B cell (primary cell): ENCODE measurements at regions of chr2 and their contacts with region 1.

Region 1: DNA sequence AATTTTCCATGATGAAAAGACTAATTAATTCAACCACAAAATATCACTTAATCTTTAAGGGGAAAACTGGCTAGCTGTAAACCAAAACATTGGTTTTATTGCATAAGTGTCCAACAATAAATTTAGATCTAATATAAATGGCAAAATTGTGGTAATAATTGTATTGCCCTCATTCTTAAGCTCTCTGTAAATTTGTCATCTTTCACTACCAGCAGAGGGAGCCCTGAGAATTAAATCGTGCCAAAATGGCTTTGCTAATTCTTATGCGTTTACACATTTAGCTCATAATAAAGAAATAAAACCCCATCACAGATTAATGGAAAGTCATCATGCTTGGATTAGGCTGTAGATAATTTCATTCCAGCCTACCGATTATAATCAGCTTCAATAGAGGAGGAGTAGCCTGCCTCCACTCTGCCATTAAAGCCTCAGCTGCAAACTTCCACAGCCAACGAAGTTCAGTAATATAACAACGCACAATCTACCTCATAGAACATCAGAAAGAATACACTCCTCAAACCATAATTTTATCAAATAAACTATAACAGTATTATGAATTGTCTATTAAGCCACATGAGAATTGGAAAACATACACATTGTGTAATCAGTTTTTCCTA is 70.0 kb upstream of the ATP5MC3 start:
- DNase-seq: peak; percentile 30
- ATAC-seq: no peak
- H3K4me3 ChIP-seq: no peak overlapping the region
- H3K4me3 Mint-ChIP-seq: no peak overlapping the region
- H3K27ac ChIP-seq: no peak overlapping the region
- H3K27ac Mint-ChIP-seq: no peak overlapping the region
- H3K4me1 ChIP-seq: no peaks in the 10 kb centered on the region
- H3K4me1 Mint-ChIP-seq: no peaks in the 10 kb centered on the region
- H3K27me3 ChIP-seq: peaks cover 0 to 18% (median 0%) of the 10 kb centered on the region in 4 experiments
- H3K27me3 Mint-ChIP-seq: peaks cover 38% of the 10 kb centered on the region
- CTCF ChIP-seq: peak; percentile 75

Region 2: DNA sequence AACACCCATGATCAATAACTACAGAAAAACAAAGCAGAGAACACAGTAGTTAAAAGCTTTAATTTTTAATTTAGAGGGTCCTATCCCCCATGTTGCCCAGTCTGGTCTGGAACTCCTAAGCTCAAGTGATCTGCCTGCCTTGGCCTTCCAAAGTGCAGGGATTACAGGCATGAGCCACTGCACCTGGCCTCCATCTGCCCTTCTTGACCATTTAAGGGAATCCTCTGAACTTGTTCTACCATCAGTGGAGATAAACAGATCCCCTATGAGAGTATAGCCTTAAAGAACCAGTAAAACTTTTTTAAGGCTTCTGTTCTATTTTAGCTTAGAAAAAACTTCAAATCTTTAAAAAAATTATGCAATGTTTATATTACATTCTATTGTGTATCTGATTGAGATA is 56.5 kb before region 1 on chr2:
- CTCF ChIA-PET with region 1: no interaction called
- POLR2A ChIA-PET with region 1: no interaction called
- intact Hi-C with region 1: no loop called
- DNase-seq: no peak
- ATAC-seq: no peak
- H3K4me3 ChIP-seq: no peak overlapping the region
- H3K4me3 Mint-ChIP-seq: no peak overlapping the region
- H3K27ac ChIP-seq: no peak overlapping the region
- H3K27ac Mint-ChIP-seq: no peak overlapping the region
- H3K4me1 ChIP-seq: no peaks in the 10 kb centered on the region
- H3K4me1 Mint-ChIP-seq: no peaks in the 10 kb centered on the region
- H3K27me3 ChIP-seq: no peaks in the 10 kb centered on the region
- H3K27me3 Mint-ChIP-seq: peaks cover 51% of the 10 kb centered on the region
- CTCF ChIP-seq: no peak

Region 3: DNA sequence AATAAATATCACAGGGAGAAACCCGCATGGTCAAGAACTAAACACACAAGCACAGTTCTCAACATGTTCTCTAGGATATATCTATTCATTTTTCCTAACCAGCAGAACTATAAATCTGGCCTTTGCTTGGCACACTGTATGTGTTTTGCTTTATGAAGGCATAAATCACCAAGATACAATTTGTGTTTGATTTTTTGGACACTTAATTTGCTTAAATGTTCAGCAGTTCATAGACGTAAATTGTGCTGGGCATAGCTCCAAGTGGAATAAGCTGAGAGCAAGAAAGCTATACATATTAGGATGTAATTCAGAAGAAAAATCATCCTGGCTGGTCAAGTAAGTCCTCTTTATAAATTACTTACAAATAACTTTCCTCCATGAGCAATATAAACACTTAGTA is 271.5 kb after region 1 on chr2:
- CTCF ChIA-PET with region 1: no interaction called
- POLR2A ChIA-PET with region 1: no interaction called
- intact Hi-C with region 1: no loop called
- DNase-seq: no peak
- ATAC-seq: no peak
- H3K4me3 ChIP-seq: no peak overlapping the region
- H3K4me3 Mint-ChIP-seq: no peak overlapping the region
- H3K27ac ChIP-seq: no peak overlapping the region
- H3K27ac Mint-ChIP-seq: no peak overlapping the region
- H3K4me1 ChIP-seq: no peaks in the 10 kb centered on the region
- H3K4me1 Mint-ChIP-seq: no peaks in the 10 kb centered on the region
- H3K27me3 ChIP-seq: no peaks in the 10 kb centered on the region
- H3K27me3 Mint-ChIP-seq: no peaks in the 10 kb centered on the region
- CTCF ChIP-seq: no peak

Region 4: DNA sequence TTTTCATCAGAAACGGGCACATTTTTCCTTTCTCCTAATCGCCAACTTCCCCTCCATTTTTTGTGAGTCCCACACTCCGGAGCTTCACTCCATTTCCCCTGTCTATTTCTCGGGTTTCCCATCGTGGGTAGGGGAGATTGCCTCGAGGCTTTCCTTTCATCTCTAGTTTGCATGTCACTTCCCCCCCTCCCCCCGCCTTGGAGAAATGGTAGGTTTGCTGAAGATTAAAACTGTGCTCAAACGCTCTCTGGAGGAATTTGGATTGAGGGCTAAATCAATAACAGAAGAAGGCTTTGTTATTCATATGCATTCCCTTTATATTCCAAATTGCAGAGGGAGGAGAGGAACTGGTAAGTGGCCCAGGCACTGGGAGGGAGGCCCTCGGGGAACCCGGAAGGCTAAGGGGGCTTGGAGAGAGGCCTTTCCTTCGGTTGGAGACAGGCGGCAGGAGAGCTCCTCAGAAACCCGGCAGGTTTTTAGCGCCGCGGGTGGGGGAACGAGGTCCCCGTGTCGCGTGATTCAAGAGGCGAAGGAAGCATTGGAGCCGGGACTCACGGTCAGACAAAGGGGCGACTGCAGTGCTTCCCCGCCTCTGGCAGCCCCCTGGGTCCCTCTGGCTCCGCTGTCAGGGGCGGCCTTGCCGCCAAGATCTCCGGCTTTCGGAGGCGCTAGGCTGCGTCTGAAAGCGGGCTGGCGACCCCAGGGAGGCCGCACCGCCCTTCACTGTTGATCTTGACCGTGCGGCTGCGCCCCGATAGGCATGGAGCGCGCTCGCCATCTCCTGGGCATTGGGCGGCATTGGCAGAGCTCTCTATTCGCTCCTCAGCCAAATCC is 845.7 kb after region 1 on chr2:
- CTCF ChIA-PET with region 1: interaction called, 21 read pairs
- POLR2A ChIA-PET with region 1: no interaction called
- intact Hi-C with region 1: no loop called
- DNase-seq: peak; percentile 71
- ATAC-seq: peak; percentile 65
- H3K4me3 ChIP-seq: peak overlapping the region; percentile 4 to 42 (median 17)
- H3K4me3 Mint-ChIP-seq: peak overlapping the region; percentile 75
- H3K27ac ChIP-seq: no peak overlapping the region
- H3K27ac Mint-ChIP-seq: peak overlapping the region; percentile 6
- H3K4me1 ChIP-seq: peaks cover 24 to 38% of the 10 kb centered on the region in 2 donors
- H3K4me1 Mint-ChIP-seq: peaks cover 24% of the 10 kb centered on the region
- H3K27me3 ChIP-seq: peaks cover 0 to 89% (median 73%) of the 10 kb centered on the region in 4 experiments
- H3K27me3 Mint-ChIP-seq: peaks cover 74% of the 10 kb centered on the region
- CTCF ChIP-seq: peak; percentile 76